PC-9 (cell line): ENCODE measurements at regions of chr2 and their contacts with region 1.

Region 1: DNA sequence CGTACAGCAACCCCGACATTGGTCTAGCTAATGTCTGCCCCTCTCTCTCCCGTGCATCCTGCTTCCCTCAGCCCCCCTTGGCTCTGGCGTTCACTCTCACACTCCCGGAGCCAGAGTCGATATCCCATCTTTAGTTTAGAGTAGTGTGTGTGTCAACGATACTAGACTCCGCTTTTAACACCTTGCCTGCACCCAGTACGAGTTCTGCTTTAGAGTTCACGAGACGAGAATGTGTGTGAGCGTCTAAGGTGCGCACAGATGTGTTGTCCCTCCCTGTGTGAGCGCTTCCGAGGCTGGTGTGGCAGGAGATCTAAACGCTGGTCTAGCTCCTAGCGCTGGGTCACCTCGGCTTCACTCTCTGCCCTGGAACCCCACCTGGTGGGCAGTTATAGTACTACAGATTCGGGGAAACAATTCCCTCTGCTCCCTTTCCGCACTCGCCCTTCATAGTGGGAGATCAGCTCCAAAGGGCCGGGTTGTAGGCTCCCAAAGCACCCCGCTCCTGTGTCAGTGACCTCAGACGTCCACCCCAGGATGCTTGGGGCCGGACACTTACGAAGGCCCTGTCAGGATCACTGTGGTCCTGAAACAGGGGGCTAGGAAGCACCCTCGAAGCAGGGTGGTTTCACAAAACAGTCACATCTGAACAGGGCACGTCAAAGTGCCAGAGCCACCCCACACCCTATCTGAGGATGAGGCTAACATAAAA is 2.6 kb upstream of the CYP26B1 start:
- DNase-seq: peak; percentile 72 to 81
- H3K4me3 ChIP-seq: no peak overlapping the region
- H3K27ac ChIP-seq: no peak overlapping the region
- H3K4me1 ChIP-seq: peaks cover 30% of the 10 kb centered on the region
- H3K27me3 ChIP-seq: peaks cover 11% of the 10 kb centered on the region; the same call in 1 of the 2 replicates
- CTCF ChIP-seq: peak; percentile 94

Region 2: GRCh38 chr2:71545572-71546274 is 604.6 kb before region 1 on chr2:
- CTCF ChIA-PET with region 1: interaction called, 4 read pairs
- POLR2A ChIA-PET with region 1: no interaction called
- intact Hi-C with region 1: loop called (anchors 1 kb)
- DNase-seq: peak; percentile 31 to 48
- H3K4me3 ChIP-seq: no peak overlapping the region
- H3K27ac ChIP-seq: no peak overlapping the region
- H3K4me1 ChIP-seq: no peaks in the 10 kb centered on the region
- H3K27me3 ChIP-seq: no peaks in the 10 kb centered on the region
- CTCF ChIP-seq: peak; percentile 87

Region 3: GRCh38 chr2:71784734-71785473 is 365.4 kb before region 1 on chr2:
- CTCF ChIA-PET with region 1: interaction called, 3 read pairs
- POLR2A ChIA-PET with region 1: no interaction called
- intact Hi-C with region 1: loop called (anchors 5 kb)
- DNase-seq: peak; percentile 58 to 94
- H3K4me3 ChIP-seq: no peak overlapping the region
- H3K27ac ChIP-seq: peak overlapping the region; percentile 42; the same call in 1 of the 2 replicates
- H3K4me1 ChIP-seq: peaks cover 41% of the 10 kb centered on the region
- H3K27me3 ChIP-seq: no peaks in the 10 kb centered on the region
- CTCF ChIP-seq: no peak; the same call in 1 of the 2 replicates

Region 4: GRCh38 chr2:71923887-71924533 is 226.3 kb before region 1 on chr2:
- CTCF ChIA-PET with region 1: interaction called, 9 read pairs
- POLR2A ChIA-PET with region 1: no interaction called
- intact Hi-C with region 1: loop called (anchors 1 kb)
- DNase-seq: peak; percentile 42 to 48
- H3K4me3 ChIP-seq: no peak overlapping the region
- H3K27ac ChIP-seq: no peak overlapping the region
- H3K4me1 ChIP-seq: peaks cover 10% of the 10 kb centered on the region
- H3K27me3 ChIP-seq: no peaks in the 10 kb centered on the region
- CTCF ChIP-seq: peak; percentile 94

Region 5: GRCh38 chr2:72173640-72174321 is 23.5 kb after region 1 on chr2:
- CTCF ChIA-PET with region 1: interaction called, 13 read pairs
- POLR2A ChIA-PET with region 1: no interaction called
- intact Hi-C with region 1: no loop called
- DNase-seq: no peak
- H3K4me3 ChIP-seq: no peak overlapping the region
- H3K27ac ChIP-seq: no peak overlapping the region
- H3K4me1 ChIP-seq: no peaks in the 10 kb centered on the region
- H3K27me3 ChIP-seq: no peaks in the 10 kb centered on the region
- CTCF ChIP-seq: no peak

Region 6: DNA sequence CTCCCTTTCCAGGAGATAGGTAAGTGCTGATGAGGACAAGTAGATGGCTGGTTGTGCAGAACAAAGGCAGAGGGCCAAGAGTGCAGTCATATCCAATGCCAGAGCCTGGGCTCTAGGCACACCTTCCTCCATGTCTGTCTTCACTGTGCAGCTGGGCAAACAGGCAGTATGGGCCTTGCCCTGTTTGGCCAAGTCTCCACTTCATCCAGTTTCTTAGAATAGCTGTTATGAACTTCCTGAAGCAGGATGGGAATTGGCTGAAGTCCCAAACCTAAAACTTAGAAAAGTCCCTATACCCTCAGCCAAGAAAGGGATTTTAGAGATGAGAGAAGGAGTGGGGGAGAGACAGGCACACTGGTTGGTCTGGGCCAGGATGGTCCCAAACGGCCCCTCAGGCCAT is 34.9 kb after region 1 on chr2:
- CTCF ChIA-PET with region 1: no interaction called
- POLR2A ChIA-PET with region 1: no interaction called
- intact Hi-C with region 1: no loop called
- DNase-seq: no peak
- H3K4me3 ChIP-seq: no peak overlapping the region
- H3K27ac ChIP-seq: no peak overlapping the region
- H3K4me1 ChIP-seq: no peaks in the 10 kb centered on the region
- H3K27me3 ChIP-seq: no peaks in the 10 kb centered on the region
- CTCF ChIP-seq: no peak

Region 7: DNA sequence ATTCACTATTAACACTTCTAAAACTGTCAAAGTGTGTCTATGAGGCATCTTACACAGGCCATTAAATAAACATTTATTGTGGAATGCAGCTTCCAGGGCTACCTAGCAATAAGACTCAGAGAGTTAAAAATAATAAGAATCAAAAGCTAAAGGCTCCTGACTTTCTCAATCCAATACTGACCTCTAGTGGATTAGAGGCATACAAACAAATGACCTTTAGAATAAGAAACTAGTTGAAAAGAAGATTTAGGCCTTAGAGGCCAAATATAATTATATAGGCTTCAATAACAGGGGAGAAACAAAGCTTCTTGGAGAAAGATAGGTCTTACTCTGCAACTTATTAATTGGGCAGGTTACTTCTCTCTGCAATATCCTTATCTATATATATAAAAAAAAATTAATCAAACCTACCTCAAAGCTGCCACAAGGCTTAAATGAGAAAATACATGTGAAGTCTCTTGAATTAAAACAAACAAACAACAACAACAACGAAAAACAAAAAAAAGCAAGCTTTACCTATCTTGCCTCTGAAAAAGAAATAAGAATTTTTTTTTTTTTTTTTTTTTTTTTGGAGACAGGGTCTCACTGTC is 429.4 kb after region 1 on chr2:
- CTCF ChIA-PET with region 1: no interaction called
- POLR2A ChIA-PET with region 1: no interaction called
- intact Hi-C with region 1: loop called (anchors 1 kb)
- DNase-seq: peak in 1 of 2 experiments; percentile 58
- H3K4me3 ChIP-seq: no peak overlapping the region
- H3K27ac ChIP-seq: no peak overlapping the region
- H3K4me1 ChIP-seq: peaks cover 9% of the 10 kb centered on the region
- H3K27me3 ChIP-seq: no peaks in the 10 kb centered on the region
- CTCF ChIP-seq: peak; percentile 90

Region 8: GRCh38 chr2:72862239-72862988 is 712.1 kb after region 1 on chr2:
- CTCF ChIA-PET with region 1: no interaction called
- POLR2A ChIA-PET with region 1: no interaction called
- intact Hi-C with region 1: loop called (anchors 5 kb)
- DNase-seq: peak; percentile 78 to 90
- H3K4me3 ChIP-seq: peak overlapping the region; percentile 46; the same call in 1 of the 2 replicates
- H3K27ac ChIP-seq: no peak overlapping the region
- H3K4me1 ChIP-seq: no peaks in the 10 kb centered on the region; the same call in 1 of the 2 replicates
- H3K27me3 ChIP-seq: no peaks in the 10 kb centered on the region
- CTCF ChIP-seq: peak; percentile 97

Region 9: DNA sequence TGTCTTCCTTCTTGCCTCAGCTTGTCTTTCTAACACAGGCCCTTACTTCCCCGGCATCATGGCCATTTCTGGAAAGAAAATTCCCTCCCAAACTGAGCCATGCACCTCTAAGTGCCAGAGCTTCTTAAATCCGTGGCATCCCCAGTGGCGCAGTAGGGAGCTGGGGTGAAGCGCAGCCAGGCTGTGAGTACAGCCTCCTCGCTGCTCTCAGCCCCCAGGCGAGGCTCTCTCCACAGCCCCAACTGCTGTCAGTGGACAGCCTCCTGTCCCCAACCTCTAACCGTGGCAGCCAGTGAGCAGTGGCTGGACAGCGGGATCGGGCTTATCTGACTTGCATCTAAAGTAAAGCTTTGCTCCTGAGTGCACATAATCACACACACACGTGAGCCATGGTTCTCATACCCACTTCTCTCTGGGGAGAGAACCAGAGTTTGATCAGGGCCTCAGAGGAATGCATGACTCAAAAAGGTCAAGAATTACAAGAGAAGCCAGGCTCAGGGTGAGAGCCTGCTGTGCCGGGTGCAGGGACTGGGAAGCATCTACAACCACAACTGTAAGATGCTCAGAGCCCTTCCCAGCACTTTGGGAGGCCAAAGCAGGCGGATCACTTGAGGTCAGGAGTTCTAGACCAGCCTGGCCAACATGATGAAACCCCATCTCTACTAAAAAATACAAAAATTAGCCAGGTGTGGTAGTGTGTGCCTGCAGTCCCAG is 870.5 kb after region 1 on chr2:
- CTCF ChIA-PET with region 1: no interaction called
- POLR2A ChIA-PET with region 1: no interaction called
- intact Hi-C with region 1: no loop called
- DNase-seq: no peak
- H3K4me3 ChIP-seq: no peak overlapping the region
- H3K27ac ChIP-seq: no peak overlapping the region
- H3K4me1 ChIP-seq: no peaks in the 10 kb centered on the region
- H3K27me3 ChIP-seq: no peaks in the 10 kb centered on the region
- CTCF ChIP-seq: no peak